Calu3 (cell line): ENCODE measurements at regions of chr15 and their contacts with region 1.

Region 1: GRCh38 chr15:55108858-55109518 is 87.8 kb downstream of the RSL24D1 start:
- DNase-seq: peak; percentile 82
- H3K4me3 Mint-ChIP-seq: no peak overlapping the region
- H3K27ac Mint-ChIP-seq: no peak overlapping the region
- H3K4me1 Mint-ChIP-seq: no peaks in the 10 kb centered on the region
- H3K27me3 Mint-ChIP-seq: peaks cover 10% of the 10 kb centered on the region
- CTCF ChIP-seq: peak; percentile 82

Region 2: GRCh38 chr15:53962332-53963241 is 1146.4 kb before region 1 on chr15:
- CTCF ChIA-PET with region 1: interaction called, 4 read pairs
- intact Hi-C with region 1: loop called (anchors 1 kb)
- DNase-seq: peak; percentile 67
- H3K4me3 Mint-ChIP-seq: no peak overlapping the region
- H3K27ac Mint-ChIP-seq: no peak overlapping the region
- H3K4me1 Mint-ChIP-seq: no peaks in the 10 kb centered on the region
- H3K27me3 Mint-ChIP-seq: no peaks in the 10 kb centered on the region
- CTCF ChIP-seq: peak; percentile 73

Region 3: DNA sequence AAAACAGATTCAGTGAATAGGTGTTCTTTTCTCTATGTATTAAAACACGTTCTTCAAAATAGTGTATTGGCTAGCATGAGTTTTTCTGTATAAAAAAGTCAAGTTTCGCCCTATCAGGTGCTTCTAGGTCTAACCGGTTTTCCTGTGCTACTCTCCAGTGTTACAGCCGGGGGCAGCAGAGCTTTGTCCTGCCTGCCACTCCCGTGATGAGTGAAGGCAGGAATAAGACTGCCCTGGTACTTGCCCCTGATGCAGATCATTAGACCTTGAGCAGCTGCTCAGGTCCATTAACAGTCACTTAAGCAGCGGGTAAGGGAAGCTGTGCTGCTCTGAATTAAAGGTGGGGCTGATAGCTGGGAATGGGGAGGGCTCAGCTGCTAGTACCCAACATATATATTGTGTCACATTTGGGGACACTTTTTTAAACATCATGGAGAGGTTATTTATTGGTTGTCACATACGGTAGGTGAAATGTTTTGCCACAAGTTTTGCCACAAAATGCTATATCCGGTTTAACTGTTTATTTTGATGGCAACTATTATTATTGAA is 1132.1 kb before region 1 on chr15:
- CTCF ChIA-PET with region 1: interaction called, 3 read pairs
- intact Hi-C with region 1: loop called (anchors 5 kb)
- DNase-seq: peak; percentile 69
- H3K4me3 Mint-ChIP-seq: no peak overlapping the region
- H3K27ac Mint-ChIP-seq: no peak overlapping the region
- H3K4me1 Mint-ChIP-seq: peaks cover 7% of the 10 kb centered on the region
- H3K27me3 Mint-ChIP-seq: no peaks in the 10 kb centered on the region
- CTCF ChIP-seq: peak; percentile 50

Region 4: GRCh38 chr15:54082836-54083492 is 1026.0 kb before region 1 on chr15:
- CTCF ChIA-PET with region 1: no interaction called
- intact Hi-C with region 1: loop called (anchors 5 kb)
- DNase-seq: peak; percentile 20
- H3K4me3 Mint-ChIP-seq: no peak overlapping the region
- H3K27ac Mint-ChIP-seq: no peak overlapping the region
- H3K4me1 Mint-ChIP-seq: no peaks in the 10 kb centered on the region
- H3K27me3 Mint-ChIP-seq: no peaks in the 10 kb centered on the region
- CTCF ChIP-seq: peak; percentile 87

Region 5: GRCh38 chr15:55044162-55044561 is 64.8 kb before region 1 on chr15:
- CTCF ChIA-PET with region 1: interaction called, 3 read pairs
- intact Hi-C with region 1: loop called (anchors 10 kb)
- DNase-seq: no peak
- H3K4me3 Mint-ChIP-seq: no peak overlapping the region
- H3K27ac Mint-ChIP-seq: no peak overlapping the region
- H3K4me1 Mint-ChIP-seq: no peaks in the 10 kb centered on the region
- H3K27me3 Mint-ChIP-seq: no peaks in the 10 kb centered on the region
- CTCF ChIP-seq: no peak